ENCODE measurements at regions of chr4 and their contacts with region 1.

Region 1: DNA sequence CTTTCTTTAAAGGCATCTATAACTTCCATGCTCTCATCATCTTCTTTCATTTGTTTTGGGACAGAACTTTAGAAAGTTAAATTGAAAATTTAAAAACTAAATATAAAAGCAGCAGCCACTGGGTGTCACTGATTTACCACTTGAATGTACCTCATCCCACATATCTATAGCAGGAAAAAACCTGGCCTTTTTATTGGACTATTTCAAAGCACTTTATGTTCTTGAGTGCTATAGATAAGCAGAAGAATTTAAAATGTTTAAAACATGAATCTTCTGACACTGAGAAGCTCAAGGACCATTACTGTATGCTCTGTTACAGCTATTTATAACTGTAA is 165.3 kb upstream of the TTC29 start:
- DNase-seq: no peak

Region 2: GRCh38 chr4:147071209-147071740 is 39.7 kb before region 1 on chr4:
- intact Hi-C with region 1: no loop called
- DNase-seq: no peak

Region 3: DNA sequence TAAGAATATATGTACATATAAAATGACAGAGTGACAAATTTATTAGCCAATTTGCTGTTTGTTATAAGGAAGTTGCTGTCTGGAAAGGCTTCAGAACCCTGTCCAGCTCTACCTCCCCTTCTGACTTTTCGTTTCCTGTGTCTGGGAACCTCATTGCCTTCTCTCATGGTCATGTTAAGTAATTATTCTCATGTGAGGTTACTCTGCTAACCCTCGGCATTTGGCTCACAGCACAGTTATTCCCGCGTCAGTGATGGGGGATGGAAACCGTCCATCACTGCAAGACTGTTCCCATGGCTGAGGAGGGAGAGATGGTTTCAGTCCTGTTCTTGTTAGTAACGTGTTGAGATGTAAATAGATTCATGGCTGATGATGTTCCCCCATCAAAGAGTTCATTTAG is 381.8 kb after region 1 on chr4:
- intact Hi-C with region 1: no loop called
- DNase-seq: no peak

Region 4: DNA sequence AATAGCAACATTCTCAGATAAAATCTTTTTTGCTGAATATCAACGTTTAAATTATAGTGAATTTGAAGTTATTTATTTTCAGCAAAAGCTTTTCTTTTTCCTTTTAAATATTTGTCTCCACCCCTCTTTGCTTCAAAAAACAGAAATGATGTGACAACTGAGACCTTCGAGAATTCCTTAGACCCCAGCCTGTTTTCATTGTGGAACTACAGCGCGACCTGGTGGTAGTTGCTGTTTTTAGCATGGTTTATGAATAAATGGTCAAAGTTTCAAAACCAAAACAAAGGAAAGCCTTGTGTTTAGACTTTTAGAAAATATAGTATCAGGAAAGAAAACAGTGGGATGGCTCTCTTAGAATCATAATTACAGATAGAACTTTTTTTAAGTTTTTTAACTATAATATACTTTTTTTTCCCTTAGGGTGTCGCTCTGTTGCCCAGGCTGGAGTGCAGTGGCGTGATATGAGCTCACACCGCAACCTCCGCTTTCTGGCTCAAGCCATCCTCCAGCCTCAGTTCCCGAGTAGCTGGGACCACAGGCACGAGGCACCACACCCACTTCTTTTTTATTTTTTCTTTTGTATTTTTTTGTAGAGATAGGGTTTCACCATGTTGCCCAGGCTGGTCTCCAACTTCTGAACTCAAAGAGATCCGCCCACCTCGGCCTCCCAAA is 479.4 kb after region 1 on chr4:
- intact Hi-C with region 1: loop called (anchors 2 kb)
- DNase-seq: no peak

Measured in cardiac septum (tissue), 1 donor.